Breast epithelium (tissue), 4 donors: ENCODE measurements at regions of chr1 and their contacts with region 1.

Region 1: DNA sequence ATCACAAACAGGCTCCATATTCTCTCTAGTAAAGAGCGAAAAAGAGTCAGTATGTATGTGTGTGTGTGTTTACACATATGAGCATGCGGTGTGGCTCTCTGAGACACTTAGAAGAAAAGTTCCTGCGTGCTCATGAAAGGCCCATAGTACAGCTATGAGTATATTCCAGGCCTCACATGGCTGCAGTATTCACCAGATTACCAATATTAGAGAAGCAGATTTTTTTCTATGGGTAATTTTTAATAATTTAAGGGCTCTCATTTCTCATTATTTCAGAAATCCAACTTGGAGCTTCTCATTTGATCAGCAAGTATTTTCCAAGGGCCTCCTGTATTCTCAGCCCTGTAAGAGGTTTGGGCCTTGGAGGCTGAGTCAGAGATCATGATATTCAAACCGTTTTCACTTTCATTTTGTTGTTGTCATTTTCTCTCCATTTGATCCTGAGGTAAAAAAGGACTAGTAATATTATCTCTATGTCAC is 232.9 kb upstream of the SGIP1 start:
- DNase-seq: no peak
- H3K4me3 ChIP-seq: peak overlapping the region in 2 of 3 donors; percentile 25 to 57
- H3K27ac ChIP-seq: peak overlapping the region; percentile 59 to 69
- H3K4me1 ChIP-seq: peaks cover 0 to 4% of the 10 kb centered on the region in 2 donors
- H3K27me3 ChIP-seq: no peaks in the 10 kb centered on the region
- CTCF ChIP-seq: no peak
- POLR2A ChIP-seq: no peak

Region 2: GRCh38 chr1:64936966-64937365 is 1364.0 kb before region 1 on chr1:
- intact Hi-C with region 1: loop called (anchors 5 kb)
- DNase-seq: no peak
- H3K4me3 ChIP-seq: no peak overlapping the region
- H3K27ac ChIP-seq: no peak overlapping the region
- H3K4me1 ChIP-seq: no peaks in the 10 kb centered on the region
- H3K27me3 ChIP-seq: no peaks in the 10 kb centered on the region
- CTCF ChIP-seq: no peak
- POLR2A ChIP-seq: no peak

Region 3: DNA sequence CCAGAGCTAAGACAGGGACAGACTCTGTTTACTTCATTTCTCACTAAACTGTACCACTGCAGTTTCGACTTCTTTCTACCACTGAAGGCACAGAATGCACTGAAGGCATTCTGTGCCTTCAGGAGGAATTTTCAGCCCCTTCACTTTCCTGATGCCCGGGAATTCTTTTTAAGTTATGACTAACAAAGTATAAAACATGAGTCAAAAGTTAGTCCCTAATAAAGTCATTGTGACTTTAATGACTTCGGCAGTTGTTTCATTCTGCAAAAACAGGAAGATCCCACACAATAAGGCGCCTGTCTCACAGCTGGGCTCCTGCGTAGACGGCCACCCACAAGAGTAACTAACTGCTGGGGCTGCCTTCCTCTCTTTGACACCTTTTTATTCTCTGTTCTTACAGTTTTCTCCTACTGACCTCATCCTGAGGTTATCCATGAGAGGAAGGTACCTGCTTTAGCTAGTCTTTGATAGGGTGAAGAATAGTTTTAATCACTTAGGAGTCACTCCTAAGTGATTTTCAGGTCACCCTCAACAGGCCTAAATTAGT is 49.1 kb after region 1 on chr1:
- intact Hi-C with region 1: no loop called
- DNase-seq: no peak
- H3K4me3 ChIP-seq: peak overlapping the region in 1 of 3 donors; percentile 41
- H3K27ac ChIP-seq: peak overlapping the region; percentile 80 to 83
- H3K4me1 ChIP-seq: peaks cover 4 to 9% of the 10 kb centered on the region in 2 donors
- H3K27me3 ChIP-seq: no peaks in the 10 kb centered on the region
- CTCF ChIP-seq: no peak
- POLR2A ChIP-seq: no peak